Activated CD4-positive, alpha-beta memory T cell treated with anti-CD3 and anti-CD28 coated beads, Interleukin-2, amount 10 ng/mL, durations not matched to agents 7 days and 5 days (primary cell): ENCODE measurements at regions of chr10 and their contacts with region 1.

Region 1: DNA sequence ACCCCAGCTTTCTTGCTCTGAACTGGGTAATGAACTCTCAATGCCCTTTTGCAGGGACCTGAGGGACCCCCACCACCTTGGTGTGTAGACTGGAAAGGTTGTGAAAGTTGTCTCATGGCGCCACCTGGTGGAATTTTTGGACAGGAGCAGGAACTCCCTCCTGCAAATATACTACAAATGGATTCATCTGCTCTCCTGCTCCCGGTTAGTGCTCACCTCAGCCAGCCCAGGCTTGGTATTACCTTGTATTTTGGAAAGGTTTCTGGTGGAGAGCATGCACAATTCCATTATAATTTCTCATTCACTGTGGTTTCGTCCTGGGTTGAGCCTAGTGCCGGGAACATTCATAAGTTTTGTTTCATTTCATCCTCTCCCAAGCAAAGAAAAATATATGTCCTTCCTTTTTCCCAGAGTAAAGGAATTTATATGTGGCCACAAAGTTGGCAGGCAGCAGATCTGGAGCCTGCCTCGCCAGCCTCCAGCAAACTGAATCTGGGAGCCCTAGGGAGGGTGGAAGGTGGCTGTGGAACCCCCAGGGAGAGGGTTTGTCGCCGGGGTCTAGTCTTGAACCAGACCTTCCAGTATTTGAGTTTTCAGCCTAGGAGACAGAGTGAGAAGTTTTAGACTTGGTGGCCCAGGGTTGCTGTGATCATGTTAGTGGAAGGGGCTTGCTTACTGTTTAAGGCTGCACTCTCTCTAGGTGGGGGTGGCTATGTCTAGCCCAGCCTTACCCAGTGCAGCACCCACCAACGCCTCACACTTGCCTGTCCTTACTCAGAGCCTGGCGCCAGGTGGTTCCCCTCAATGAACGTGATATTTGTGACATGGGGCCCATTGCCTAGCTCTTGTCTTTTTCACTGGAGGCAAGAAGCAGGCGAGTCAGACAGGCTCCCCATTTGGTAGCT is 9.5 kb downstream of the FAM241B start:
- DNase-seq: peak; percentile 70
- H3K4me3 Mint-ChIP-seq: no peak overlapping the region
- H3K27ac Mint-ChIP-seq: no peak overlapping the region
- H3K4me1 Mint-ChIP-seq: no peaks in the 10 kb centered on the region
- H3K27me3 Mint-ChIP-seq: no peaks in the 10 kb centered on the region

Region 2: GRCh38 chr10:69614130-69614529 is 25.4 kb before region 1 on chr10:
- CTCF ChIA-PET with region 1: interaction called, 10 read pairs
- POLR2A ChIA-PET with region 1: no interaction called
- DNase-seq: no peak
- H3K4me3 Mint-ChIP-seq: no peak overlapping the region
- H3K27ac Mint-ChIP-seq: no peak overlapping the region
- H3K4me1 Mint-ChIP-seq: no peaks in the 10 kb centered on the region
- H3K27me3 Mint-ChIP-seq: peaks cover 14% of the 10 kb centered on the region

Region 3: DNA sequence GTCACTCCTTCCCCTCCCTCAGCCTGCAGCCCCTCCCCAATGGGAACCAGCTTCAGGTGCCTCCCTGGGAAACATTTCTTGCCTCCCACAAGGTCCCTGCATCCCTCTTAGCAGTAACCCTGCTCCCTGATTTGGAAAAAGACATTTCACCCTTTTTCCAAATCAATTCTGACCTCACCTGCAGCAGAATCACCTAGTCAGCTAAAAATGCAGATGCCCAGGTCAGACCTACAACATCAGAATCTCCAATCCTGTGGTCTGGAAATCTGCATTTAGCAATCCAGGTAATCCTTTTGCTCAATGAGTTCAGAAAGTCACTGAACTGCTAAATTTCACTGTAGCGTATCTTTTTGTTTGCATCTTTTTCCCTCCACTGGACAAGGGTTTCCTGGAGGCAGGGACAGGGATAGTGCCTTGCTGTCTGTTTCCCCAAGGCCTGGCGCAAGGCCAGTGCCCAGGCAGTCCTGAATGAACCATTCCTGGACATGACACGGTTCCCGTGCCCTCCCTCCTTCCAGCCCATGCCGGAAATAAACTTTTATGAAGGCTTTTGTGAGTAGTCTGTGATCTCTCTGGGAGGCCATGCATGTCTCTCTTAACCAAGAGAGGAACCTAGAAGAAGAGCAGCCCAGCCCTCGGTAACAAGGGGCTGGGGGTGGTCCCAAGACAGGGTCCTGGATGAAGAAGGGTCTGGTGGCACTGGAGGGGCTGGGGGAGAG is 206.2 kb after region 1 on chr10:
- CTCF ChIA-PET with region 1: no interaction called
- POLR2A ChIA-PET with region 1: no interaction called
- DNase-seq: no peak
- H3K4me3 Mint-ChIP-seq: no peak overlapping the region
- H3K27ac Mint-ChIP-seq: no peak overlapping the region
- H3K4me1 Mint-ChIP-seq: no peaks in the 10 kb centered on the region
- H3K27me3 Mint-ChIP-seq: peaks cover 28% of the 10 kb centered on the region

Region 4: DNA sequence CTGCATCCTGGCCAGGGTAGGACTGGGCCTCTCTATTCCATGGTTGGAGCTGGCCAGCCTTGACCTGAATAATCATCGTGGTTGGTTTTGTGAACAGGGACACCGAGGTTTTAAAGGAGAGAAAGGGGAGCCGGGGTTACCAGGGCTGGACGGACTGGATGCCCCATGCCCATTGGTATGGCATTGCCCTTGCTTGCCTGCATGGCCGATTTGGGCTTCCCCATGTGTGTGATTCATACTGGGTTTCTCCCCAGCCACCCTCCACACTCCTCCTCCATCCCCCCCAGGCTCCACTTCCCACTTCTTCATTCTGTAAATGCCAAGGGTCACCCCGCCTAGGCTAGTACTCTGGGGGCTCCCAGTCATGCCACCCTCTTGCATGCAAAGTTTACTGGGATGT is 314.3 kb after region 1 on chr10:
- CTCF ChIA-PET with region 1: no interaction called
- POLR2A ChIA-PET with region 1: no interaction called
- DNase-seq: no peak
- H3K4me3 Mint-ChIP-seq: no peak overlapping the region
- H3K27ac Mint-ChIP-seq: no peak overlapping the region
- H3K4me1 Mint-ChIP-seq: no peaks in the 10 kb centered on the region
- H3K27me3 Mint-ChIP-seq: peaks cover 8% of the 10 kb centered on the region